ENCODE measurements at regions of chr20 and their contacts with region 1.

Region 1: DNA sequence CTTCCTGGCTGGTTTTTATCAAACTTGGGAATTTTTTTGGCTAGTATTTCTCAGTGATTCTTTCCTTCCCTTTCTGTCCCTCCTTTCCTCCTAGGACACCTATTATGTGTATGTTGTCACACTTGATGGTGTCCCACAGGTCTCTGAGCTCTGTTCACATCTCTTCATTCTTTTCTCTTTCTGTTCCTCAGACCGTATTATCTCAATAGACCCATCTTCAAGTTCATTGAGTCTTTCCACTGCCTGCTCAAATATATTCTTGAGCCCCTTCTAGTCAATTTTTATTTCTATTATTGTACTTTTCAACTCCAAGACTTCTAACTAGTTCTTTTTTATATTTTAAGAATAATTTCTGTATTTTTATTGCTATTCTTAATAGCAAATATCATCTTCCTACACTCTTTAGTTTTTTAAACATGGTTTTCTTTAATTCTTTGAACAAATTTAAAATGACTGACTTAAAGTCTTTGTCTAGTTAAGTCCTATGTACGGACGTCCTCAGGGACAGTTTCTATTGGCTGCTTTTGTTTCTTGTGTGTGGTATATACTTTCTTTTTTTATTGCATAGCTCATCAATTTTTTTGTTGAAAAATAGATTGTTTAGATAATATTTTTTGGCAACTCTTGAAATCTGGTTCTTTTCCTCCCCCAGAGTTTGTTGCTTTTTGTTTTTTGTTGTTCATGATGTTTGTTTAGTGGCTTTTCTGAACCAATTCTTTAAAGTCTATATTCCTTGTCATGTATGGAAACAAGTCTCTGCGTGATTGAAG is 480.0 kb downstream of the PREX1 start:
- DNase-seq: no peak
- H3K4me3 ChIP-seq: no peak overlapping the region
- H3K27ac ChIP-seq: no peak overlapping the region
- H3K4me1 ChIP-seq: no peaks in the 10 kb centered on the region
- H3K27me3 ChIP-seq: no peaks in the 10 kb centered on the region
- CTCF ChIP-seq: no peak
- POLR2A ChIP-seq: no peak

Region 2: DNA sequence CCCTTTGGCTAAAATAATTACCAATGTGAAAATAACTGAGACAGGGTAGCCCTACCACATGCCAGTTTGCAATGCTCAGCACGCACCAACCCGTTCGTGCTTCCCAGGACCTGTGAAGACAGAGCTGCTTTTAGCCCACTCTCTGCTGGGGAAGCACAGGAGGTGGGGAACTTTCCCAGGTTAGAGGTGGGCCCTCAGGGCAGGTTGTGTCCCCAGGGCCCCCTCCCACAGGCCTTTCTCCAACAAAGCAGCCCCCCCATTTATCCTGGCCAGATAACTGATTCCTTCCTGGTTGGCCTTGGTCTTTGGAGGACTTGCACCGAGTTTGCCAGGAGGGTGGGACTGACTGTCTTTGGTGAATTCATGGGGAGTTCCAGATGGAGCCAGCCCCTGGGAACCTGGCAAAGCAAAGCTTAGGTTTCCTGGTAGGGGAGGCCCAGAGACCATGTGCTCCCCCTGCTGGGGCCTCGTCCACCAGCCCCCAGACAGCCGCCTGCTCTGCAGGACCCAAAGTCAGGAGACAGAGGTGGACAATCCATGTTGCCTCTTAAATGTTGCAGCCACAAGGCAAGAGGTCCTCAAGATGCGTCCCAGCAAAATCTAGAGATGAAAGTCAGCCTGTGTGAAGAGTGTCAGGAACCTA is 18.1 kb before region 1 on chr20:
- intact Hi-C with region 1: loop called (anchors 2 kb)
- DNase-seq: no peak
- H3K4me3 ChIP-seq: no peak overlapping the region
- H3K27ac ChIP-seq: no peak overlapping the region
- H3K4me1 ChIP-seq: no peaks in the 10 kb centered on the region
- H3K27me3 ChIP-seq: peaks cover 0 to 11% of the 10 kb centered on the region in 2 donors
- CTCF ChIP-seq: no peak
- POLR2A ChIP-seq: no peak

Measured in breast epithelium (tissue), 4 donors.